Transverse colon (tissue), 4 donors: ENCODE measurements at regions of chr7 and their contacts with region 1.

Region 1: GRCh38 chr7:4819560-4820404 is 42.0 kb downstream of the PAPOLB start:
- DNase-seq: no peak
- H3K4me3 ChIP-seq: no peak overlapping the region
- H3K27ac ChIP-seq: no peak overlapping the region
- H3K4me1 ChIP-seq: no peaks in the 10 kb centered on the region
- H3K27me3 ChIP-seq: no peaks in the 10 kb centered on the region
- CTCF ChIP-seq: no peak
- EP300 ChIP-seq: no peak
- POLR2A ChIP-seq: no peak

Region 2: GRCh38 chr7:4871056-4871680 is 51.4 kb after region 1 on chr7:
- in situ Hi-C with region 1: no loop called
- intact Hi-C with region 1: no loop called
- DNase-seq: no peak
- H3K4me3 ChIP-seq: no peak overlapping the region
- H3K27ac ChIP-seq: no peak overlapping the region
- H3K4me1 ChIP-seq: no peaks in the 10 kb centered on the region
- H3K27me3 ChIP-seq: no peaks in the 10 kb centered on the region
- CTCF ChIP-seq: no peak
- EP300 ChIP-seq: no peak
- POLR2A ChIP-seq: no peak

Region 3: GRCh38 chr7:4888134-4888533 is 68.4 kb after region 1 on chr7:
- in situ Hi-C with region 1: no loop called
- intact Hi-C with region 1: loop called (anchors 5 kb)
- DNase-seq: no peak
- H3K4me3 ChIP-seq: no peak overlapping the region
- H3K27ac ChIP-seq: no peak overlapping the region
- H3K4me1 ChIP-seq: peaks cover 0 to 5% (median 1%) of the 10 kb centered on the region in 4 donors
- H3K27me3 ChIP-seq: peaks cover 12% of the 10 kb centered on the region
- CTCF ChIP-seq: no peak
- EP300 ChIP-seq: no peak
- POLR2A ChIP-seq: no peak

Region 4: GRCh38 chr7:5064391-5065106 is 244.8 kb after region 1 on chr7:
- in situ Hi-C with region 1: no loop called
- intact Hi-C with region 1: no loop called
- DNase-seq: no peak
- H3K4me3 ChIP-seq: peak overlapping the region in 1 of 4 donors; percentile 18
- H3K27ac ChIP-seq: no peak overlapping the region
- H3K4me1 ChIP-seq: no peaks in the 10 kb centered on the region
- H3K27me3 ChIP-seq: no peaks in the 10 kb centered on the region
- CTCF ChIP-seq: no peak
- EP300 ChIP-seq: no peak
- POLR2A ChIP-seq: no peak

Region 5: GRCh38 chr7:5314864-5315263 is 495.1 kb after region 1 on chr7:
- in situ Hi-C with region 1: no loop called
- intact Hi-C with region 1: loop called (anchors 10 kb)
- DNase-seq: no peak
- H3K4me3 ChIP-seq: no peak overlapping the region
- H3K27ac ChIP-seq: no peak overlapping the region
- H3K4me1 ChIP-seq: no peaks in the 10 kb centered on the region
- H3K27me3 ChIP-seq: no peaks in the 10 kb centered on the region
- CTCF ChIP-seq: no peak
- EP300 ChIP-seq: no peak
- POLR2A ChIP-seq: no peak

Region 6: GRCh38 chr7:5872326-5872725 is 1052.5 kb after region 1 on chr7:
- in situ Hi-C with region 1: no loop called
- intact Hi-C with region 1: no loop called
- DNase-seq: no peak
- H3K4me3 ChIP-seq: no peak overlapping the region
- H3K27ac ChIP-seq: no peak overlapping the region
- H3K4me1 ChIP-seq: no peaks in the 10 kb centered on the region
- H3K27me3 ChIP-seq: no peaks in the 10 kb centered on the region
- CTCF ChIP-seq: no peak
- EP300 ChIP-seq: no peak
- POLR2A ChIP-seq: no peak